Left lung (tissue), 14 donors: ENCODE measurements at regions of chr1 and their contacts with region 1.

Region 1: GRCh38 chr1:223081181-223081994 is 61.7 kb downstream of the TLR5 start:
- DNase-seq: peak; percentile 80 to 94 (median 88)
- ATAC-seq: peak; percentile 98
- H3K4me3 ChIP-seq: peak overlapping the region in 1 of 2 donors; percentile 20
- H3K27ac ChIP-seq: peak overlapping the region; percentile 69
- H3K4me1 ChIP-seq: peaks cover 6 to 19% of the 10 kb centered on the region in 2 donors
- H3K27me3 ChIP-seq: no peaks in the 10 kb centered on the region
- CTCF ChIP-seq: peak; percentile 87 to 88

Region 2: DNA sequence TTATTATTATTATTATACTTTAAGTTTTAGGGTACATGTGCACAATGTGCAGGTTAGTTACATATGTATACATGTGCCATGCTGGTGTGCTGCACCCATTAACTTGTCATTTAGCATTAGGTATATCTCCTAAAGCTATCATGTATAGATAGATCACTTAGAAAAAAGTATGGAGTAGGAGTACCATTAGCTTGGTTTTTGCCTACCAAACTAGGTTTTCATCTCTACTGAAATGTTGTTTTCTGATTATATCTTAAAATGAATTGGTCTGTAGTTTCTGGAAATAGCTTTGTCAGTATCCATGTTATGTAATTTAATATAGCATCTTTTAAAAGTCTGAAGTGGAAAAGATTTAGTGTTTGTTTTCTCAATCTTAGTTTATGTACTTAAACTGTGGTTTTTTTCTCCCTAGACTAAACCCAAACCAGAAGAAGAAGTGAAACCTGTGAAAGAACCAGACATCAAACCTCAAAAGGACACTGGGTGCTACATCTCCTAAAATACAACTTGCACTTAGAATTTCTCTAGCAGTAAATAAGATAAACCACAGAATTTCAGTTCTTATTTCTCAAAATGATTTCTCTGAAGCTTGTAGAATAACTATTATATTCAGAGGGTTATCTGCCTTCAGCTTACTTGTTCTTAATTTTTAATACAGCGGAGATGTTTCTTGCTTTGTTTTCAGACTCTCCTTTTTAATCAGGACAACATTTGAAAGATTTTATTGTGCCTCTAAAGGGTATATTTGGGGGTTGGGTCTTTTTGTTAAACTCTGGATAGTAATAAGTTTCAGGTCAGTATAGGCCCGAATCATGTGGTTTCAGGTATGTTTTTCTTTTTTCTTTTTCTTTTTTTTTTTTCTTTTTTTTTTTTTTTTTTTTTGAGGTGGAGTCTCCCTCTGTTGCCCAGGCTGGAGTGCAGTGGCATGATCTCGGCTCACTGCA is 348.9 kb before region 1 on chr1:
- intact Hi-C with region 1: loop called in 1 of 2 experiments (anchors 10 kb)
- DNase-seq: no peak
- ATAC-seq: no peak
- H3K4me3 ChIP-seq: no peak overlapping the region
- H3K27ac ChIP-seq: no peak overlapping the region
- H3K4me1 ChIP-seq: no peaks in the 10 kb centered on the region
- H3K27me3 ChIP-seq: no peaks in the 10 kb centered on the region
- CTCF ChIP-seq: no peak

Region 3: DNA sequence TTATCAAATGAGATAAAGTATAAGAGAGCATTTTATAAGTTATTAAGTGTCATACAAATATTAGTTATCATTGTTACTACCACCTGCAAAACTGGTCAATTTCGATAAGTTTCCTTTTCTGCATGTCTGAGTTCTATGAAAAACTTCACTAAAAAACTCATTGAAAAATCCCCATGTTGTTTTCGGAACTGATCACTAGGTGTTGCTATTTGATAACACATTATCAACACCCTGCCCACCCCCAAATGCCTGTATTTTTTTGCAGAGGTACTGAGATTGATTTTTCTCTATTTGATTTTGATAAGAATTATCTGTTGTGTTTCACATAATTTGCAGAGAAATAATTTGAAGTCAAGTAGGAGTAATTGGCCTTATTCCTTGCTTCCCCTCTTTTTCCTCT is 288.6 kb before region 1 on chr1:
- intact Hi-C with region 1: loop called (anchors 5 to 10 kb)
- DNase-seq: no peak
- ATAC-seq: peak; percentile 56
- H3K4me3 ChIP-seq: no peak overlapping the region
- H3K27ac ChIP-seq: no peak overlapping the region
- H3K4me1 ChIP-seq: no peaks in the 10 kb centered on the region
- H3K27me3 ChIP-seq: no peaks in the 10 kb centered on the region
- CTCF ChIP-seq: peak; percentile 22 to 43

Region 4: GRCh38 chr1:222852326-222852725 is 229.1 kb before region 1 on chr1:
- intact Hi-C with region 1: no loop called
- DNase-seq: no peak
- ATAC-seq: no peak
- H3K4me3 ChIP-seq: no peak overlapping the region
- H3K27ac ChIP-seq: no peak overlapping the region
- H3K4me1 ChIP-seq: no peaks in the 10 kb centered on the region
- H3K27me3 ChIP-seq: no peaks in the 10 kb centered on the region
- CTCF ChIP-seq: no peak